ENCODE measurements at regions of chr6 and their contacts with region 1.

Region 1: DNA sequence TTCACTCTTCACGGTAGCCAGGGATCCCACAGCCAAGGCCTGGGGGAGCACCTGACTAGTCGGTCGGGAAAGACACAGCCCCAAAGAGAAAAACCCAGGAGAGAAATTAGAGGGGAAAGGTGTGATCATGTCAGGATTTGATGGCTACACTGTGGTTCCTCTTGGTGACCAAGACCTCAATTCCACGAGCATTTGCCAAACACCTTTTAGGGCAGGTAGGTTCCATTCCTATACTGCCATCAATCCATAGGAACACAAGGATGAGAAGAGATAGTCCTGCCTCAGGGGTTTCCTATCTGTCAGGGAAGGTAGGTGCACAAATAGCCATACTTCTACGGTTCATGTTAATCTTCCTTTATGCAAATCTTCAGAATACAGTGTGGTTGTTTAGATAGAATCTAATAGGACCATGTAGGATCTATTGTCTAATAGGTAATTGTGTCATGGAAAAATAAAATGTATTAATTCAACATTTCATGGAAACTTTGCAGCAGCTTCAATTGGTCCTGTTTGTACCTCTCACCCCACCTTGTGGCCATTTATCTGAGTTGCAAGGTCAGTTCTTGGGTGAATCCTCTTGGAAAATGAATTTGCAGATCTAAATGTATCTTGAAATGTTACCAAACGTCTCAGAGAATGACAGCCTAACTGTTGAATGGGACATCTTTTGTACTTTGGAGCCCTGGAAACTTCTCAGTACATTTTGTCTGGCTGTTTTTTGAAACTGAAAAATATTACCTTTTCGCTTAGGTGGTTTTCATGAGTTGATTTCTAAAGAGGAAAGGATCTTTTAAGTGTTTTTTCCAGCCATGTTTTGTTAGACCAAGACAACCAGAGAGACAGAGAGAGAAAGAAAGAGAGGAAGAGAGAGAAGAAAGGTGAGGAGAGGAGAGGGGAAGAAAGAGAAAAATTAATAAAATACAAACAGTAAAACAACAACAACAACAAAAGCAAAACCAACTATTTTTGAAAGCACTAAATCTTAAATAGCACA is 33.7 kb upstream of the IYD start:
- DNase-seq: peak; percentile 69 to 84 (median 75)
- ATAC-seq: peak; percentile 77
- H3K4me3 ChIP-seq: no peak overlapping the region
- H3K27ac ChIP-seq: no peak overlapping the region
- H3K4me1 ChIP-seq: peaks cover 8 to 13% of the 10 kb centered on the region in 2 experiments; a peak in 3 of 5 replicates
- H3K27me3 ChIP-seq: no peaks in the 10 kb centered on the region
- CTCF ChIP-seq: peak; percentile 79 to 95 (median 87)
- EP300 ChIP-seq: no peak
- POLR2A ChIP-seq: no peak
- RAD21 ChIP-seq: peak; percentile 99

Region 2: GRCh38 chr6:150068720-150069648 is 266.1 kb before region 1 on chr6 and contains the start of gene ULBP3:
- CTCF ChIA-PET with region 1: interaction called, 25 read pairs
- POLR2A ChIA-PET with region 1: no interaction called
- in situ Hi-C with region 1: no loop called
- intact Hi-C with region 1: no loop called
- DNase-seq: peak; percentile 64 to 86 (median 84)
- ATAC-seq: peak; percentile 88
- H3K4me3 ChIP-seq: peak within 1 kb of the TSS; percentile 28; the same call in 1 of the 2 replicates
- H3K27ac ChIP-seq: no peak within 1 kb of the TSS
- H3K4me1 ChIP-seq: peaks cover 5 to 24% of the 10 kb centered on the region in 2 experiments; a peak in 3 of 5 replicates
- H3K27me3 ChIP-seq: peaks cover 18 to 52% of the 10 kb centered on the region in 2 experiments
- CTCF ChIP-seq: peak; percentile 45 to 70 (median 50); a peak in 5 of 6 replicates
- EP300 ChIP-seq: no peak
- POLR2A ChIP-seq: no peak
- RAD21 ChIP-seq: peak in 1 of 2 experiments; percentile 18; a peak in 1 of 4 replicates
- polyA plus RNA-seq, gene ULBP3: not detected

Region 3: DNA sequence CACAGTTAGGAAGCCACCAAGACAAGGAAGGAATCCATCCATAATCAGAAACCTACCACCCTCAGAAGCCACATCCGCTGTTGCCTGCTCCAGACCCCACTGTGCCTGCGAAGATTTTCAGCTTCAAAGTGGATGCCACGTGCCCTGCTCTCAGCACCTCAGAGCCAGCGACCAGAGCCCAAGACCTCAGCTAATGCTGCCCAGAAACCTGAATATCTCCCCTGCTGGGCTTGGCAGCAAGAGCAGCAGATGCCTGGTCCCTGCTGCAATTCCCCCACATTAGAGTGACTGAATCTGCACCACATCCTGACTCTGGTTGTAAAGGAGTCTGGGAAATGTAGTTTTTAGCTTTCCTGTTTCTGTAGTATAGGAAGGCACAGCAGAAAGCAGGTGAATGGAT is 255.5 kb before region 1 on chr6:
- CTCF ChIA-PET with region 1: interaction called, 47 read pairs
- POLR2A ChIA-PET with region 1: no interaction called
- in situ Hi-C with region 1: loop called (anchors 5 kb)
- intact Hi-C with region 1: loop called (anchors 1 kb)
- DNase-seq: no peak
- ATAC-seq: peak; percentile 52
- H3K4me3 ChIP-seq: no peak overlapping the region
- H3K27ac ChIP-seq: no peak overlapping the region
- H3K4me1 ChIP-seq: no peaks in the 10 kb centered on the region; a peak in 2 of 5 replicates
- H3K27me3 ChIP-seq: peaks cover 18 to 20% of the 10 kb centered on the region in 2 experiments
- CTCF ChIP-seq: no peak
- EP300 ChIP-seq: no peak
- POLR2A ChIP-seq: no peak
- RAD21 ChIP-seq: no peak

Region 4: DNA sequence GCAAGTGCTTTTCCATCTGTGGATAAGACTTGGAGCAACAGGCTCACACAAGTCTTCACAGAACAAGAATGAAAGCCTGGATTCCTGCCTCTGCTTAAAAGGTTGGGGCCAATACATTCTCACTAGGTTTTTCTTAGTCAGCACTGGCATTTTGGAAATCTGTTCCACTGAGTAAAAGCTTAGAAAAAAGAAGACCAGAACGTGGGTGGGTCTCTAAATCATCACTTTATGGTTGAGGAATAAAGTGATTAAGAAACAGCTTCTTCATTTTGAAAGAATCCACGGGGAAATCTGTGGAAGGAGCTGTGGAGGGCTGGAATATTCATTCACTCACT is 181.6 kb before region 1 on chr6:
- CTCF ChIA-PET with region 1: interaction called, 4 read pairs
- POLR2A ChIA-PET with region 1: no interaction called
- in situ Hi-C with region 1: no loop called
- intact Hi-C with region 1: loop called (anchors 2 kb)
- DNase-seq: no peak
- ATAC-seq: no peak
- H3K4me3 ChIP-seq: no peak overlapping the region
- H3K27ac ChIP-seq: no peak overlapping the region
- H3K4me1 ChIP-seq: peaks cover 35 to 58% of the 10 kb centered on the region in 2 experiments
- H3K27me3 ChIP-seq: no peaks in the 10 kb centered on the region
- CTCF ChIP-seq: no peak
- EP300 ChIP-seq: no peak
- POLR2A ChIP-seq: no peak
- RAD21 ChIP-seq: no peak

Region 5: DNA sequence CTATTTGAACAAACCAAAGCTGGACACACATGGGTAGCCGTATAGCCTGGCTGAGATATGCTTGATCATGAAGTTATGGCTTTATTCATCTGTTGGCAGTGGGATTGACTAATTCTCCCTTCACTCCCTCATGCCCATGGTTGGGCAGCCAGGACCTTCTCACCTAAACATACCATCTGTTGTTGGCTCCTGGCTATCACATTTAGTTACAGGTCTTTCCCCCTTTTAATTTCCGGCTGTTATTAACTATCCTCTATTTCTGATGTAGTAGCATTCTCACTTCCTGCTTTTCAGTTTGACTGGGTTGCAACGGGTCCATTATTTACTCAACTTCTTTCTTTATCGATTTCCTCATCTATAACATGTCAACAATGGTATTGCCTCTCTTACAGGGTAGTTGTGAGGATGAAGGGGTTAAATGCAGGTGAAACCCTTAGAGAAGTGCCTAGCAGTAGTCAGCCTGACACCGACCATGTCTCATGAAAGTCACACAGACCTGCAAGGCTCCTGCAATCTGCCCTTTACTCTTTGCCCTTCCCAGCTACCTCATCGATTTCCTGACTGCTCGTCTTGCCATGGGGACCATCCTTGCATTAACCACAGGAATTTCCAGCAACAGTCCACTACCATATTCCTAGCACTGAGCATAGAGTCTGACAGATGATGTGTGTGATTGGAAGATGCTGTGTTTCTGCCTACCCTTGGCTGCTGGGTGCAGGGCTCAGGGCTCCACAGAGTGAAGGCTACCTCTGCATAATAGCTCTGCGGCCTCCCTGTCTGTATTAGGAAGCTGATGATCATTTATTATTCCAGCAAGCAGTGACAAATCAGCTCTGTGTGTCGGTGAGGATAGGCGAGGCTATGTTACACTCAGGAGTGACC is 150.0 kb before region 1 on chr6:
- CTCF ChIA-PET with region 1: no interaction called
- POLR2A ChIA-PET with region 1: no interaction called
- in situ Hi-C with region 1: no loop called
- intact Hi-C with region 1: loop called (anchors 1 kb)
- DNase-seq: no peak
- ATAC-seq: peak; percentile 23
- H3K4me3 ChIP-seq: no peak overlapping the region
- H3K27ac ChIP-seq: no peak overlapping the region
- H3K4me1 ChIP-seq: peaks cover 15 to 32% of the 10 kb centered on the region in 2 experiments; a peak in 4 of 5 replicates
- H3K27me3 ChIP-seq: no peaks in the 10 kb centered on the region
- CTCF ChIP-seq: no peak
- EP300 ChIP-seq: no peak
- POLR2A ChIP-seq: no peak
- RAD21 ChIP-seq: no peak

Region 6: DNA sequence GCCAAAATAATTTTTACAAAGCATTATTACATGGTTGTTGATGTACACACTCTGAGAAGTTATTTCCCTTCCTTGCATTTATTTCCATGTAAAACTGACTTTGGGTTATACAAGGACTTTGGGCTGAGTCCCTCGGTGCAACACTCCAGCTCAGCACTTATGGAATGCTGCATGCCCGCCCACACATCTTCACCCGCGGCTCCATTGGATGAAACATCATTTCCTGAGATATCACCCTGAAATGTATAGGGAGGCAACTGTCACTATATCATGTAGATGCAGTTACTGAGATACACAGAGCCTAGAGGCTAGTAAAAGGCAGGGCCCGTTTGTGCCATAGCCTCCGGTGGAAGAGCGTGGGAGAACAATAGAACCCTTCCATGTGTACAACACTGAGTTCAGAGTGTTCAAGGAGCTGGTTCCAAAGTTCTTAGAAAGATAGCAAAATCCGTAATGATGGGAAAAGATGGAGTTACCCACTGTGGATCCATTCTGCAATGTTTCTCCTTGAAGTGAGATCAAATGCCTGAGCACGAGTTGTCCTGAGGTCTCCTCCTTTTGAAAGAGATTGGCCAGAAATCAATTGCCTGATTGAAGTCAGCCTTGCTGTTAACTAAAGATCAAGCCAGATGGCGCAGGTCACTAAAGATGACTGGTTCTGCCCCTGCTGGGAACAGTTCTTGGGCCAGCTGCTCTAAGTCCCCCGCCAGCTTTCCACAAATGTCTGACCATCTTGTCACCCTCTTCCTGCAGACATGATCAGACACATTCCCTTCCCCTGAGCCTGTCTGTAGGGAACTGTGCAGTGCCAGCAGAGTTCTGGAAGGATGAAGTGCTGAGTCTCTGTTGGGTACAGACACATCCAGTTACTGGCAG is 67.2 kb before region 1 on chr6:
- CTCF ChIA-PET with region 1: interaction called, 8 read pairs
- POLR2A ChIA-PET with region 1: no interaction called
- in situ Hi-C with region 1: no loop called
- intact Hi-C with region 1: loop called (anchors 1 kb)
- DNase-seq: peak; percentile 58 to 89 (median 75)
- ATAC-seq: peak; percentile 63
- H3K4me3 ChIP-seq: no peak overlapping the region
- H3K27ac ChIP-seq: peak overlapping the region; percentile 67
- H3K4me1 ChIP-seq: peaks cover 39 to 59% of the 10 kb centered on the region in 2 experiments
- H3K27me3 ChIP-seq: no peaks in the 10 kb centered on the region
- CTCF ChIP-seq: peak; percentile 42 to 51 (median 46); a peak in 5 of 6 replicates
- EP300 ChIP-seq: peak; percentile 95
- POLR2A ChIP-seq: peak; percentile 71
- RAD21 ChIP-seq: peak; percentile 60 to 71

Measured in K562 (cell line).